Endothelial cell of umbilical vein (primary cell): ENCODE measurements at regions of chr19 and their contacts with region 1.

Region 1: DNA sequence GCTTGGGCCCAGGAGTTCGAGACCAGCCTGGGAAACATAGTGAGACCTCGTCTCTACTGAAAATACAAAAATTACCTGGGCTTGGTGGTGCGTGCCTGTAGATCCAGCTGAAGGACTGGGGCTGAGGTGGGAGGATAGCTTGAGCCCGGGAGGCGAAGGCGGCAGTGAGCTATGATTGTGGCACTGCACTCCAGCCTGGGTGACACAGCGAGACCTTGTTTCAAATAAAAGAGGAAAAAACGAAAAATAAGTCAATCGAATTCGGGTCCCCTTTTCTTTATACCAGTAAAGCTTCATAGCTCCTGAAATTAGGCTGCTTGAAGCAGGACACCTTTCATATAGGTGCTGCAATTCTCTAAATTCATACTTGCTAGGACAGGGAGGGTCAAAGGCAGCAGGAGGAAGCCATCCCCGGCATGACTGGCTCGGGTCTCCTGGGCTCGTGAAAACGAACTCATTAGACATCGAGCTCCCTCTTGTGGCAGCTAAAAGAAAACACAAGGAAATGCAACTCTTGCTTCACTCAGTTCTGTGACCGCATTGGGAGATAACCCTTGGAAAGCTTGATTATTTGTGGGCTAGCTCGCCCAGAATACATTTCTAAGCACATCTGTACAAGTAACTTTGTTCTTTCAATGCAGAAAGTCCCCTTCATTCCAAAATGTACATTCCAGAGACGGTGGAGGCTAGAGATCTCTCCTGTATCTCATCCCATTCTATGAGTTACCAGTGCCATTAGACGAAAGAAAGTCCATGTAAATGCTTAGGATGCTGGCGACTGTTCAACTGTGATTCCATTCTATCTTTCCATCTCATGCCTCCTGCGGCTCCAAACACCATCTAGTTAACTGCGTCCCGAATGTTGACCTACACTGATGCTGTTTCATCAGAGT is 16.8 kb downstream of the FPR2 start:
- DNase-seq: peak; percentile 52
- H3K4me3 ChIP-seq: no peak overlapping the region
- H3K27ac ChIP-seq: no peak overlapping the region
- H3K4me1 ChIP-seq: no peaks in the 10 kb centered on the region
- H3K27me3 ChIP-seq: no peaks in the 10 kb centered on the region
- CTCF ChIP-seq: peak; percentile 63 to 69
- POLR2A ChIP-seq: no peak

Region 2: GRCh38 chr19:51127755-51128154 is 650.1 kb before region 1 on chr19:
- CTCF ChIA-PET with region 1: no interaction called
- POLR2A ChIA-PET with region 1: no interaction called
- dilution Hi-C with region 1: no loop called
- intact Hi-C with region 1: no loop called
- DNase-seq: no peak
- H3K4me3 ChIP-seq: no peak overlapping the region
- H3K27ac ChIP-seq: no peak overlapping the region
- H3K4me1 ChIP-seq: peaks cover 8% of the 10 kb centered on the region
- H3K27me3 ChIP-seq: no peaks in the 10 kb centered on the region
- CTCF ChIP-seq: no peak
- POLR2A ChIP-seq: no peak

Region 3: DNA sequence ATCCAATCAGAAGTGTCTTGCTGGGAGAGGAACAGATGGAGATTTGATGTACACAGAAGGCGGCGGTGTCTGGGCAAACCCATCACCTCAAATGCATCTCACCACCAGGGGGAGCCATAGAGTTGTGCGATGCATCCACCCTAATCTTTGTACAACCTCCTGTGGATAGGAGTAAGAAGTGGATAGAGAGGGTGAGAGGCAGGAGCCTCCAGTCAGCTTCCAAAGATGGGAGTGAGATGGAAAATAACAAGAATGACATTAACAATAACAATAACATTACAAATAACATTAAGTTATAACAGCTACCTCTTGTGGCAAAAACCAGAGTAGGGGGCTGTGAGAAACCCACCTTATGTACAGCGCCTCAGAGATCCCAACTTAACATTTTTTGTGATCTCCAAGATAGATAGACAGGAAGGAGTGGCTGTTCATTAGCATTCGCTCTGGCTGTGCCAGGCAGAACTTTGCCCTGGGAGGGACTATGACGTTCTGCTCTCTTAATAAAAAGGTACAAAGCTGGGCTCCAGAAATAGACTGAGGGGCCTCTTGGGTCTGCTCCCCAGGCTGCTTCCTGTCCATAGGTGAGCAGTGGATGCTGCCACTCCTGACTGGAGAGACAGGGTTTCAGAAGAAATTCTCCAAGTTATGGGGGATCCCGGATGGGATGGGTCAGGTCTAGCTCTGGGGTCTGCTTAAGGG is 304.7 kb before region 1 on chr19:
- CTCF ChIA-PET with region 1: interaction called, 7 read pairs
- POLR2A ChIA-PET with region 1: no interaction called
- dilution Hi-C with region 1: no loop called
- intact Hi-C with region 1: loop called (anchors 2 kb)
- DNase-seq: peak; percentile 61
- H3K4me3 ChIP-seq: no peak overlapping the region
- H3K27ac ChIP-seq: no peak overlapping the region
- H3K4me1 ChIP-seq: peaks cover 4% of the 10 kb centered on the region
- H3K27me3 ChIP-seq: no peaks in the 10 kb centered on the region
- CTCF ChIP-seq: peak; percentile 73 to 83
- POLR2A ChIP-seq: no peak

Region 4: DNA sequence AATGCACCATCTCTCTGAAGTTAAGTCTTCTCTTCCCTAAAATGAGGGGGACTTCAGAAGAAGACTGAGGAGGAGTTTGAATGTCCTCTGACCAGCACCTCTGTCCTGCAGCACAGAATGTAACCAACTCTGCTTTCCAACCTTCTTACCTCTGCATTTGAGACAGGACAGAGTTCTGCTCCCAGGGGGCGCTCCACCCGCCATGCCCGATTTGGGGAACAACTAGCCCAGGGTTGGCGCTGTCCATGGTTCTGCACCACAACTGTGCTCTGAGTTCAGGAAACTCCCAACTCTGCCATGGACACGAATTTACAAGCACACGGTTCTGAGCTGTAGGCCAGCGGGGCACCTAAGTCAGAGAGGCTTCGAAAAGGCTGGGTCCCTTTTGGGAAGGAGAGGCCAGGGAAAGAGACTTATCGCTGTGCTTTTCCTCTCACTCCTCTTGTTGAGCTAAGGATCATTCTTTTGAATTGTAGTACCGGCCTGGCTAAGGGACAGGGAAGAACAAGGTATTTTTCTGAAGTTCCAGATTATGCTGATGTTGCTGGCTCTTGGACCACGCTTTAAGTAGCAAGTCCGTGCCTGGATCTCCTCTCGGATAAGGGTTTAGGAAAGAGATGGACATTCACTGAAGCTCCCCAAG is 169.8 kb before region 1 on chr19:
- CTCF ChIA-PET with region 1: interaction called, 9 read pairs
- POLR2A ChIA-PET with region 1: no interaction called
- dilution Hi-C with region 1: no loop called
- intact Hi-C with region 1: loop called (anchors 1 kb)
- DNase-seq: peak; percentile 60
- H3K4me3 ChIP-seq: no peak overlapping the region
- H3K27ac ChIP-seq: no peak overlapping the region
- H3K4me1 ChIP-seq: no peaks in the 10 kb centered on the region
- H3K27me3 ChIP-seq: peaks cover 0 to 1% of the 10 kb centered on the region in 2 experiments
- CTCF ChIP-seq: peak; percentile 82
- POLR2A ChIP-seq: no peak

Region 5: DNA sequence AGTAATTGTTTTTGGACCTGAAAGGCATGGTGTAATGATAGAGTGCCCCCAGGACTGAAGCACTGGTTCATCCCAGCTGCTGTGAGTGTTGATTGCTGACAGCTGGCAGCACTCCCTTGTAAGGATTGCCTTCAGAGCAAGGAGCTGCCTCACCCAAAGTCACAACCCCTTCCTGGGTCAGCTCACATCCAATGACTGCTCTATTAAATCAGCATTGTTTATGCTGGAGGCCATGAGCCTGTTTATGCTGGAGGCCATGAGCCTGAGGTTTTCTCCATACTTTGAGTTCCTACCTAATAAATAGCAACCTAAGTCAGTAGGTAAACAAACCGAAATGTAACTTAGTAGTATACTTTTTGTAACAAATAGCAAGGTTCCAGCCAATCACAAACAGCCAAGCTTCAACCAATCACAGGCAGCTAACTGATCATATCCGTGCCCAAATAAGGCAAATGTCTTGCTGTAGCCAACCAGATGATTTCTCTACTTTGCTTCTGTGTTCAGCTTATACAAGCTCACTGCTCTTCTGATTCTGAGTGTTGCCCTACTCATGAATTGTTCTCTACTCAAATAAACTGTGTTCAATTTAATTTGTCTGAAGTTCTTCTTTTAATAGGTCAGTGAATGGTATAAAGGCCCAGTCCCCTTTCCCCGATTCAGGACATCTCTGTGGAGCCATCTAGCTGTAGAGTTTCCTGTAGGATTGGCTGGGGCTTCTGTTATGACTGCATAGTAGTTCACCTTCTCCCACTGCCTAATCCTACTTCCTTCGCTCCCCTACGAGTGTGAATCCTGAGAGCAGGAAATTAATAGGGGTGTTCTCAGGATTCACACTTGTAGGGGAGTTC is 96.3 kb before region 1 on chr19:
- CTCF ChIA-PET with region 1: interaction called, 11 read pairs
- POLR2A ChIA-PET with region 1: no interaction called
- dilution Hi-C with region 1: no loop called
- intact Hi-C with region 1: no loop called
- DNase-seq: no peak
- H3K4me3 ChIP-seq: no peak overlapping the region
- H3K27ac ChIP-seq: no peak overlapping the region
- H3K4me1 ChIP-seq: peaks cover 4% of the 10 kb centered on the region
- H3K27me3 ChIP-seq: peaks cover 2 to 4% of the 10 kb centered on the region in 2 experiments
- CTCF ChIP-seq: no peak
- POLR2A ChIP-seq: no peak

Region 6: DNA sequence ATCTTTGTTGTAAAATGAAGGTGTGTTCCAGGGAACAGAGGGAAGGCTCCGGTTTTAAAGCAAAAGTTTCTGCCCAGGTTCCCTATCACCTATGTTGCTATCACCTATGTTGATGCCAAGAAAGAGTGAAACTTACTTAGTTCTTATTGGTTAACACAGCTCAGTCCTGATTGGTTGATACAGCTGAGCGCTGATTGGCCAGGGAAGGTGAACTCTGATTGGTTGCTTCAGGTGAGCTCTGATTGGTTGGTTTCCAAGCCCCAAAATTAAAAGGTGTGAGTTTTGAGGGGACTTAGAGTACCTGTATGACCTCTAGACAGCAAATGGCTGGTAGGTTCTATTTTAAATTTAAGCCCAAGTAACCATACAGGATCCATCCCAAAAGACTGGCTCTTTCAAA is 59.3 kb after region 1 on chr19:
- CTCF ChIA-PET with region 1: no interaction called
- POLR2A ChIA-PET with region 1: no interaction called
- dilution Hi-C with region 1: no loop called
- intact Hi-C with region 1: no loop called
- DNase-seq: no peak
- H3K4me3 ChIP-seq: no peak overlapping the region
- H3K27ac ChIP-seq: no peak overlapping the region
- H3K4me1 ChIP-seq: no peaks in the 10 kb centered on the region
- H3K27me3 ChIP-seq: no peaks in the 10 kb centered on the region
- CTCF ChIP-seq: no peak
- POLR2A ChIP-seq: no peak

Region 7: GRCh38 chr19:52237771-52238400 is 460.1 kb after region 1 on chr19:
- CTCF ChIA-PET with region 1: interaction called, 10 read pairs
- POLR2A ChIA-PET with region 1: no interaction called
- dilution Hi-C with region 1: no loop called
- intact Hi-C with region 1: loop called (anchors 2 kb)
- DNase-seq: peak; percentile 69
- H3K4me3 ChIP-seq: no peak overlapping the region
- H3K27ac ChIP-seq: no peak overlapping the region
- H3K4me1 ChIP-seq: no peaks in the 10 kb centered on the region
- H3K27me3 ChIP-seq: no peaks in the 10 kb centered on the region
- CTCF ChIP-seq: peak; percentile 76 to 86
- POLR2A ChIP-seq: no peak